ENCODE measurements at regions of chr4 and their contacts with region 1.

Region 1: DNA sequence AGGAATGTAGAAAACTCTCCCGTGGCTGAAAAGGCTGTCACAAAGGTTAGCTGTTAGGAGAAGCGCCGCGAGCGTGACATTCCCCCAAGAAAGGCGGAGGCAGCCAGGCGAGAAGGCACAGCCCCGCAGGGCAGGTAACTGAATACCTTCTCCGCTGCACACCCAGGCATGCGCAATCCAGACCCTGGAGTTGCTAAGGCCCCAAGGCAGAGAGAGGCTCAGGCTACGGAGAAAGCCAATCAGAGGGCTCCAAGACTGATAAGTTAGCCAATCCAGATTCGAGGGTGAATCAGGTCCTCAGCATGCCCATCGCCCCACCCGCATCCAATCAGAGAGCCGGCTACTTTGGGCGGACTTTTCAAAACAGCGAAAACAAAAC is 485 bp upstream of the CCNG2 start:
- DNase-seq: peak in 6 of 9 donors; percentile 99 to 100 (median 99)
- ATAC-seq: peak; percentile 96
- H3K4me3 ChIP-seq: peak overlapping the region; percentile 99
- H3K4me3 Mint-ChIP-seq: peak overlapping the region; percentile 92 to 99 (median 98)
- H3K27ac ChIP-seq: peak overlapping the region; percentile 85
- H3K27ac Mint-ChIP-seq: peak overlapping the region; percentile 88 to 99 (median 99)
- H3K4me1 ChIP-seq: peaks cover 10 to 17% of the 10 kb centered on the region in 2 donors
- H3K4me1 Mint-ChIP-seq: peaks cover 13 to 52% (median 43%) of the 10 kb centered on the region in 7 donors
- H3K27me3 ChIP-seq: no peaks in the 10 kb centered on the region
- H3K27me3 Mint-ChIP-seq: peaks cover 0 to 6% (median 0%) of the 10 kb centered on the region in 5 donors

Region 2: GRCh38 chr4:75673027-75673958 is 1483.2 kb before region 1 on chr4 and contains the start of gene G3BP2:
- CTCF ChIA-PET with region 1: no interaction called
- POLR2A ChIA-PET with region 1: no interaction called
- intact Hi-C with region 1: loop called in 1 of 2 experiments (anchors 1 kb)
- DNase-seq: peak; percentile 87 to 99 (median 97)
- ATAC-seq: peak; percentile 97
- H3K4me3 ChIP-seq: peak within 1 kb of the TSS; percentile 91
- H3K4me3 Mint-ChIP-seq: peak within 1 kb of the TSS; percentile 96 to 100 (median 98)
- H3K27ac ChIP-seq: peak within 1 kb of the TSS; percentile 96
- H3K27ac Mint-ChIP-seq: peak within 1 kb of the TSS; percentile 92 to 100 (median 99)
- H3K4me1 ChIP-seq: peaks cover 38 to 43% of the 10 kb centered on the region in 2 donors
- H3K4me1 Mint-ChIP-seq: peaks cover 36 to 47% (median 44%) of the 10 kb centered on the region in 7 donors
- H3K27me3 ChIP-seq: no peaks in the 10 kb centered on the region
- H3K27me3 Mint-ChIP-seq: no peaks in the 10 kb centered on the region
- total RNA-seq, gene G3BP2: 161 to 299 (median 167) TPM

Region 3: GRCh38 chr4:76148142-76148865 is 1008.2 kb before region 1 on chr4 and contains the start of gene NUP54:
- CTCF ChIA-PET with region 1: no interaction called
- POLR2A ChIA-PET with region 1: no interaction called
- intact Hi-C with region 1: loop called (anchors 1 to 2 kb)
- DNase-seq: peak; percentile 85 to 96 (median 92)
- ATAC-seq: peak; percentile 99
- H3K4me3 ChIP-seq: peak within 1 kb of the TSS; percentile 85
- H3K4me3 Mint-ChIP-seq: peak within 1 kb of the TSS; percentile 90 to 100 (median 96)
- H3K27ac ChIP-seq: peak within 1 kb of the TSS; percentile 93
- H3K27ac Mint-ChIP-seq: peak within 1 kb of the TSS; percentile 91 to 99 (median 94)
- H3K4me1 ChIP-seq: peaks cover 12% of the 10 kb centered on the region in 2 donors
- H3K4me1 Mint-ChIP-seq: peaks cover 21 to 52% (median 45%) of the 10 kb centered on the region in 7 donors
- H3K27me3 ChIP-seq: no peaks in the 10 kb centered on the region
- H3K27me3 Mint-ChIP-seq: no peaks in the 10 kb centered on the region
- total RNA-seq, gene NUP54: 51.1 to 82.0 (median 65.5) TPM

Region 4: DNA sequence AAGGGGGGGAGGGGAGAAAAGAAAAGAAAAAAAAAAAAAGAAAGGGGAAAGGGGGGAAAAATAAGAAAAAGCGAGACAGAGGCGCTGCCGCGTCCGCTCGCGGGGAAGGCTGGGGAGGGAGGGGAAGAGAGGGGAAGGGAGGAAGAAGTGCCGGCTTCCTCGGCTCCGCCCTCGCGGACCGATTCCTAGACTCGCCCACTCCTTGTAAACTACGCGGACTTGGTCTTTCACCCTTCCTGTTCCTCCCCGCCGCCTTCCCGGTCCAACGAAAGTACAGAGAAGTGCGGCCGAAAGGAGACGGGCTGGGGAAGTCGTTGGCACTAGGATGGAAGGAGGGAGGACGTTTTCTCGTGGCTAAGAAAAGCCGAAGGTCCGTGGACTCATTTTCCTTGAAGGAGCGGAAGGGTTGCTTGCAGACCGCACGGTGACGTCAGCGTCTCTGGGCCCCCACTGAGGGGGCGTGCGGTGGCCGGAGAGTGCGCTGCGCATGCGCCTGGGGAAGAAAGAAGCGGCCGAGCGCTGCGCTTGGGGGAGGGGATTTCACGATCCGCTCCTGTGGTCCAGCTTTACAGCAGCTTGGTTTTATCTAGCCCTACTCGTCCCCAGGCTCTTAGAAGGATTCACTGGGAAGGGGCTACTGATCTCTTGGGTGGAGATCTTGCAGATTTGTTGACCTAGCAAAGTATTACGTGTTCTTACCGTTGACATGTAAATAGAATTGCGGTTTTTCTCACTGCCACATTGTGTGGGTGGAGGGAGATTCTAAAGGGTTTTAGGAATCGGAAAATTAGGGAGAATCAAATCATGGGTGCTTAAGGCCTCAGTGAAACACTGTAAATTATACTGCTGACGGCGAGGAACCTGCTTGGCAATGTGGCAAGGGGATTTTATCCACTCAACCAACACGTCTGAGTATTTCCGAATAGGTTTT is 80.4 kb before region 1 on chr4 and contains the start of gene CCNI:
- CTCF ChIA-PET with region 1: interaction called, 5 read pairs
- POLR2A ChIA-PET with region 1: interaction called, 38 read pairs
- intact Hi-C with region 1: loop called (anchors 1 kb)
- DNase-seq: peak; percentile 90 to 96 (median 95)
- ATAC-seq: peak; percentile 88
- H3K4me3 ChIP-seq: peak within 1 kb of the TSS; percentile 86
- H3K4me3 Mint-ChIP-seq: peak within 1 kb of the TSS in 4 of 10 donors; percentile 98 to 99 (median 99)
- H3K27ac ChIP-seq: peak within 1 kb of the TSS; percentile 98
- H3K27ac Mint-ChIP-seq: peak within 1 kb of the TSS in 5 of 9 donors; percentile 100
- H3K4me1 ChIP-seq: peaks cover 14 to 28% of the 10 kb centered on the region in 2 donors
- H3K4me1 Mint-ChIP-seq: peaks cover 28 to 54% (median 43%) of the 10 kb centered on the region in 7 donors
- H3K27me3 ChIP-seq: no peaks in the 10 kb centered on the region
- H3K27me3 Mint-ChIP-seq: peaks cover 0 to 7% (median 0%) of the 10 kb centered on the region in 5 donors
- total RNA-seq, gene CCNI: 206 to 393 (median 314) TPM

Region 5: DNA sequence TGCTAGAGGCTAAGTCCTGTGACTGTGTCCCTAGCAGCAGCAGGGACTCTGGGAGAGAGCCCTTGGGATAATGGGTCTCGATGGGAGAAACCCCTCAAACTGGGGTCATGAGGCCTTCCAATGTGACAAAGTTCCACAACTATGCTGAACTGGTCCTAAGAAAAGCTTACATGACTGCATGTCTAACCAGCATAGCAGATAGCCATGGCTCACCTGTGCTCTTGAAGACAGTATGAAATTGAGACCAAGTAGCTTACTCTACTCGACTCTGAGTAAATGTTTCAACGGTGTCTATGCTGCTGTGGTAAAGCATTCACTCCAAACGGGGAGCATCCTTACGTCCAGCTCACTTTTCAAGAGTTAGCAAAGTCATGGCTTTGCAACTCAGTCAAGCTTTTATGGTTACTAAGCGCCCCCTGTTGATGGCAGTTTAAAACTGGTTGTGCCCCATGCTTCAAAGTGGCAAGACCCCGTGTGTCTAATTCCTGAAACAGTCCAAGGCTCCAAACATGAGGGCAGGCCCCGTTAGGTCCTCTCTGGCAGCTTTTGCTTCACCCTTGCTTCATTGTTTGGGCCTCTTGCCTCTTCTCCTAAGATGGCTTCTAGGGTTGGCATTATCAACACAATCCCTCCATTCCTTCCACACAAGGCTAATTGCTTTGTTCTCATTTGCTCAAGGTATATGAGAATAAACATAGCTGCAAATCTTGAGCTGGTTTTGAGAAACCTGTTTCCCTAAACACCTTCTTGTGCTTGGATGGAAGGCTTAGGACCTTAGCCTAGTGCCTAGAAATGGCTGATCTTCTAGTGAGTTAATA is 47.1 kb after region 1 on chr4:
- CTCF ChIA-PET with region 1: interaction called, 12 read pairs
- POLR2A ChIA-PET with region 1: no interaction called
- intact Hi-C with region 1: loop called (anchors 2 kb)
- DNase-seq: peak; percentile 23 to 73 (median 61)
- ATAC-seq: peak; percentile 87
- H3K4me3 ChIP-seq: no peak overlapping the region
- H3K4me3 Mint-ChIP-seq: no peak overlapping the region
- H3K27ac ChIP-seq: no peak overlapping the region
- H3K27ac Mint-ChIP-seq: no peak overlapping the region
- H3K4me1 ChIP-seq: no peaks in the 10 kb centered on the region
- H3K4me1 Mint-ChIP-seq: peaks cover 0 to 7% (median 0%) of the 10 kb centered on the region in 7 donors
- H3K27me3 ChIP-seq: no peaks in the 10 kb centered on the region
- H3K27me3 Mint-ChIP-seq: peaks cover 0 to 25% (median 5%) of the 10 kb centered on the region in 5 donors

Region 6: GRCh38 chr4:78938868-78939666 is 1782.5 kb after region 1 on chr4 and contains the start of gene PAQR3:
- CTCF ChIA-PET with region 1: no interaction called
- POLR2A ChIA-PET with region 1: no interaction called
- intact Hi-C with region 1: loop called in 1 of 2 experiments (anchors 5 kb)
- DNase-seq: peak; percentile 70 to 91 (median 86)
- ATAC-seq: peak; percentile 98
- H3K4me3 ChIP-seq: peak within 1 kb of the TSS; percentile 86
- H3K4me3 Mint-ChIP-seq: peak within 1 kb of the TSS; percentile 92 to 100 (median 98)
- H3K27ac ChIP-seq: peak within 1 kb of the TSS; percentile 82
- H3K27ac Mint-ChIP-seq: peak within 1 kb of the TSS; percentile 82 to 97 (median 92)
- H3K4me1 ChIP-seq: peaks cover 5 to 14% of the 10 kb centered on the region in 2 donors
- H3K4me1 Mint-ChIP-seq: peaks cover 23 to 54% (median 39%) of the 10 kb centered on the region in 7 donors
- H3K27me3 ChIP-seq: no peaks in the 10 kb centered on the region
- H3K27me3 Mint-ChIP-seq: peaks cover 8 to 18% (median 11%) of the 10 kb centered on the region in 5 donors
- total RNA-seq, gene PAQR3: 13.1 to 24.3 (median 15.8) TPM